GM12878 (cell line): ENCODE measurements at regions of chr1 and their contacts with region 1.

Region 1: GRCh38 chr1:234114648-234115307 is 210.3 kb downstream of the SLC35F3 start:
- DNase-seq: peak; percentile 4
- ATAC-seq: peak; percentile 77
- H3K4me3 ChIP-seq: no peak overlapping the region
- H3K27ac ChIP-seq: no peak overlapping the region
- H3K4me1 ChIP-seq: no peaks in the 10 kb centered on the region
- H3K27me3 ChIP-seq: peaks cover 0 to 3% of the 10 kb centered on the region in 2 experiments; a peak in 1 of 4 replicates
- CTCF ChIP-seq: peak; percentile 60 to 74 (median 60); a peak in 5 of 6 replicates
- EP300 ChIP-seq: no peak
- POLR2A ChIP-seq: no peak
- RAD21 ChIP-seq: peak; percentile 72

Region 2: GRCh38 chr1:233364695-233365539 is 749.9 kb before region 1 on chr1:
- CTCF ChIA-PET with region 1: interaction called, 4 read pairs
- POLR2A ChIA-PET with region 1: no interaction called
- RAD21 ChIA-PET with region 1: no interaction called
- SMC1A ChIA-PET with region 1: no interaction called
- in situ Hi-C with region 1: no loop called
- intact Hi-C with region 1: loop called (anchors 1 kb)
- DNase-seq: no peak
- ATAC-seq: 0 out of 3 replicates have a peak, but pooled peaks have one; percentile 19
- H3K4me3 ChIP-seq: no peak overlapping the region
- H3K27ac ChIP-seq: no peak overlapping the region
- H3K4me1 ChIP-seq: no peaks in the 10 kb centered on the region
- H3K27me3 ChIP-seq: no peaks in the 10 kb centered on the region
- CTCF ChIP-seq: peak; percentile 45 to 53 (median 52); a peak in 4 of 6 replicates
- EP300 ChIP-seq: no peak
- POLR2A ChIP-seq: no peak
- RAD21 ChIP-seq: peak; percentile 49; the same call in 1 of the 2 replicates

Region 3: GRCh38 chr1:234125283-234125682 is 10.5 kb after region 1 on chr1:
- CTCF ChIA-PET with region 1: interaction called, 22 read pairs
- POLR2A ChIA-PET with region 1: no interaction called
- RAD21 ChIA-PET with region 1: interaction called, 7 read pairs
- SMC1A ChIA-PET with region 1: interaction called, 9 read pairs
- in situ Hi-C with region 1: no loop called
- intact Hi-C with region 1: no loop called
- DNase-seq: no peak
- ATAC-seq: peak; percentile 98
- H3K4me3 ChIP-seq: no peak overlapping the region
- H3K27ac ChIP-seq: no peak overlapping the region
- H3K4me1 ChIP-seq: no peaks in the 10 kb centered on the region
- H3K27me3 ChIP-seq: peaks cover 0 to 7% of the 10 kb centered on the region in 2 experiments; a peak in 2 of 4 replicates
- CTCF ChIP-seq: peak; percentile 56 to 63 (median 59); a peak in 5 of 6 replicates
- EP300 ChIP-seq: no peak
- POLR2A ChIP-seq: no peak
- RAD21 ChIP-seq: peak; percentile 61

Region 4: DNA sequence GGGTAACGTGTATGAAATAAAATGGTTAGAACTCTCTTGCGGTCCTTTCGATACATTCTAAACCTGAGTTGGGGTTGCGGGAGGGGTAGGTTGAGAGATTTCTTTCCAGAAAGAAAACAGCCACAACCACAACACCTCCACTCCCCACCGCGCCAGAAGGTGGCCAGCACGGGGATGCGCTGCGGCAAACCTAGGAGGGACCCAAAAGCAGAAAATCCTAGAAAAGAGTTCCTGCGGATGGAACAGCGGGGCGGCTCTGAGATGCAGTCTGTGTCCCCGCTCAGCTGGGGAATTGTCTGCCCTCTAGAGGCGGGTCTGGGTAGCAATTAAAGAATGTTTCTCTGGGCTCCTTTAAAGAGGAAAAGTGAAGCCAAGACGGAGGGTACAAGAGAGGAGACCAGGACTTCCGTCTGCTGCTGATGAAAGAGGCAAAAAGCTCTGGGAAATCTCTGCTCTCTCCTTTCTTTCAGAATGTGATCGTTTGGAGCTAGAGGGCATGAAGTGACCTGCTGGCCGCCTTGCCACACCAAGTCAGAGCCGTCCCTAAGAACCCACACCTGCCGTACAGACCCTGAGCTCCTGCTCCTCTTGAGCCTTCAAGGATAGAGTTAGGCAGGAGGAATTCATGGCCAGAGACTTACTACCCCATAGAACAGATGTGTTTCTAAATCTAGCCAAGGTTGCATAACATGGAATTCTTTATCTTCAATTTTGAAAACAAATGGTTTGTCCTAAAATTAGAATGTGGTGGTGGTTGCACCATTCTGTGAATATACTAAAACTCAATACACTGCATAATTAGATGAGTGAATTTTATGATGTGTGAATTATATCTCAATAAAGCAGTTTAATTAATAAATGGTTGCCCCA is 212.0 kb after region 1 on chr1:
- CTCF ChIA-PET with region 1: interaction called, 22 read pairs
- POLR2A ChIA-PET with region 1: no interaction called
- RAD21 ChIA-PET with region 1: no interaction called
- SMC1A ChIA-PET with region 1: interaction called, 4 read pairs
- in situ Hi-C with region 1: no loop called
- intact Hi-C with region 1: loop called (anchors 5 kb)
- DNase-seq: no peak
- ATAC-seq: peak; percentile 92
- H3K4me3 ChIP-seq: no peak overlapping the region
- H3K27ac ChIP-seq: no peak overlapping the region
- H3K4me1 ChIP-seq: peaks cover 5% of the 10 kb centered on the region
- H3K27me3 ChIP-seq: no peaks in the 10 kb centered on the region
- CTCF ChIP-seq: peak; percentile 77 to 87 (median 86)
- EP300 ChIP-seq: no peak
- POLR2A ChIP-seq: no peak
- RAD21 ChIP-seq: peak; percentile 76

Region 5: DNA sequence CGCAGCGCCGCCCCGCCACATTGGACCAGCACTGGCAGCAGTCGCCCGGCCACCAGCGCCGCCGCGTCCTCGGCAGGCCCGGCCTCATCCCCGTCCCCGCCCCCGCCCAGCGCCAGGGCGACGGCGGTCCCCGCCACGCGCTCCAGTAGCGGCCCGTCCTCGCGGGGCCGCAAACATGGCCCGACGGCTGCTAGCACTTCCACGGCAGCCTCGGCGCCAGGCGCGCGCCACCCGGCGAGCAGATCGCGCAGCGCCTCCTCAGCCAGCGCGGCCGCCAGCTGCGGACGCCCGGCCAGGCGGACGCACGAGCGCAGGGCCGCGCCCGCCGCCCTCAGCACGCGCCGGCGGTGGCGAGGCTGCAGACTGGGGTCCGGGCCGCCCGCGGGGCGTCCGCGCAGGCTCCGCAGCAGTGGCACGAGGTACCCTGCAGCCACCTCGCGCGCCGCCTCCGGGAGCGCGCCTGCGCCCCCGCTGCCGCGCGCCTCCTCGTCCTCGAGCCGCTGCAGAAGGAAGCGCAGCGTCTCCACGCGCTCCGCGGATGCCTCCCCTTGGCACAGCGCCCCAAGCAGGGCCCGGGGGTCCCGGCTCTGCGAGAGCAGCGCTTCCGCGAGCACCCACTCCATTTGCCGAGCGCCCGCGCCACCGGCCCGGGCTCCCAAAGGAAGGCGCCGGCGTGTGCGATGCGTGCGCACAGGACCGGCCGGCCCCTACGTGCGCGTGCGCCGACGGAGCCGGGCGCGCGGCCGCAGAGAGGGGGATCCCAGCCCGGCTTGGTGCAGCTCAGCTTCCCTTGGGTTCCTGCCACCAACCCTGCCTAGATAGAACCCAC is 363.9 kb after region 1 on chr1 and contains the start of gene TARBP1:
- CTCF ChIA-PET with region 1: no interaction called
- POLR2A ChIA-PET with region 1: no interaction called
- RAD21 ChIA-PET with region 1: no interaction called
- SMC1A ChIA-PET with region 1: no interaction called
- in situ Hi-C with region 1: no loop called
- intact Hi-C with region 1: loop called (anchors 5 kb)
- DNase-seq: no peak
- ATAC-seq: peak; percentile 83
- H3K4me3 ChIP-seq: peak within 1 kb of the TSS; percentile 96
- H3K27ac ChIP-seq: peak within 1 kb of the TSS; percentile 78
- H3K4me1 ChIP-seq: peaks cover 25% of the 10 kb centered on the region
- H3K27me3 ChIP-seq: no peaks in the 10 kb centered on the region
- CTCF ChIP-seq: peak; percentile 12 to 41 (median 24); a peak in 3 of 6 replicates
- EP300 ChIP-seq: no peak
- POLR2A ChIP-seq: peak; percentile 74
- RAD21 ChIP-seq: no peak
- polyA plus RNA-seq, gene TARBP1: 22.0 to 26.2 TPM

Region 6: GRCh38 chr1:234599617-234600417 is 485.0 kb after region 1 on chr1:
- CTCF ChIA-PET with region 1: no interaction called
- POLR2A ChIA-PET with region 1: no interaction called
- RAD21 ChIA-PET with region 1: no interaction called
- SMC1A ChIA-PET with region 1: no interaction called
- in situ Hi-C with region 1: no loop called
- intact Hi-C with region 1: loop called (anchors 10 kb)
- DNase-seq: no peak
- ATAC-seq: peak; percentile 76
- H3K4me3 ChIP-seq: peak overlapping the region; percentile 67; the same call in 1 of the 2 replicates
- H3K27ac ChIP-seq: peak overlapping the region; percentile 75
- H3K4me1 ChIP-seq: peaks cover 22% of the 10 kb centered on the region
- H3K27me3 ChIP-seq: no peaks in the 10 kb centered on the region
- CTCF ChIP-seq: 0 out of 6 replicates have a peak, but pooled peaks of 1 of the 3 experiments have one; percentile 5
- EP300 ChIP-seq: 0 out of 4 replicates have a peak, but pooled peaks of 1 of the 2 experiments have one; percentile 42
- POLR2A ChIP-seq: peak; percentile 70; the same call in 1 of the 2 replicates
- RAD21 ChIP-seq: no peak

Region 7: DNA sequence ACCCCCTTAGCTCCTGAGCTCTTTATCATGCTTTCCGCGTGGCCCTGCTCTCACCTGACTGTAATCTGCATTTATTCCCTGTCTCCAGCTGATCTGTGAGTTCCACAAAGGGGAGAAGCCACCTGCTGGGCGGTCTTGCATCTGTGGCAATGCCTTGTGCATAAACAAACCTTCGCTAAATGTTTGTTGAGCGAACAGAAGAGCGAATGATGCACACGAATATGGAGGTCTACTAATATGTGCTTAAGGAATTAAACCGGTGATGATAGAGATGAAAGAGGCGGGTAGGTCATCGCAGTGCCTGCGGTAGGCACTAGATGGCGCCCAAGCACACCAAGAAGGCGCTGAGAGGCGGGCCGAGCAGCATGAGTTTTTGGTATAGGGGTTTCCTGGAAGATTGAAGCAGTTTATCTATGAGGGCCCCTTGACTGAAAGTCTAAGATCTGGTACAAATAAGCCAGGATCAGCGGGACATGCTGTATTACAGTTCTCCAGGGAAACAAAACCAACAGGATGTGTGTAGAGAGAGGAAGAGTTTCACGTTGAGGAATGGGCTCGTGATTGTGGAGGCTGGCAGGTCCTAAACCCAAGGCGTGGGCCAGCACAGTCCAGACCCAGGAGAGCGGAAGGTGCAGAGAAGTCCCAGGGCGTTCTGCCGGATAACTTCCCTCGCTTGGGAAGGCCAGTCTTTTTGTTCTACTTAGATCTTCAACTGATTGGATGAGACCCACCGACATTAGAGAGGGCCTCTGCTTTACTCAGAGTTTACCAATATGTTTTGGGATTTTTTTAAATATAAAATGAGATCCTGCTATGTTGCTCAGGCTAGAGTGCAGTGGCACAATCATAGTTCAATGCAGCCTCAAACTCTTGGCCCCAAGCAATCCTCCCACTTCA is 979.2 kb after region 1 on chr1:
- CTCF ChIA-PET with region 1: no interaction called
- POLR2A ChIA-PET with region 1: no interaction called
- RAD21 ChIA-PET with region 1: no interaction called
- SMC1A ChIA-PET with region 1: no interaction called
- in situ Hi-C with region 1: loop called (anchors 25 kb)
- intact Hi-C with region 1: no loop called
- DNase-seq: no peak
- ATAC-seq: peak; percentile 94
- H3K4me3 ChIP-seq: no peak overlapping the region
- H3K27ac ChIP-seq: no peak overlapping the region
- H3K4me1 ChIP-seq: no peaks in the 10 kb centered on the region; the same call in 1 of the 2 replicates
- H3K27me3 ChIP-seq: no peaks in the 10 kb centered on the region
- CTCF ChIP-seq: peak; percentile 91 to 97 (median 94)
- EP300 ChIP-seq: no peak
- POLR2A ChIP-seq: no peak
- RAD21 ChIP-seq: peak; percentile 81